B cell (primary cell): ENCODE measurements at regions of chr9 and their contacts with region 1.

Region 1: DNA sequence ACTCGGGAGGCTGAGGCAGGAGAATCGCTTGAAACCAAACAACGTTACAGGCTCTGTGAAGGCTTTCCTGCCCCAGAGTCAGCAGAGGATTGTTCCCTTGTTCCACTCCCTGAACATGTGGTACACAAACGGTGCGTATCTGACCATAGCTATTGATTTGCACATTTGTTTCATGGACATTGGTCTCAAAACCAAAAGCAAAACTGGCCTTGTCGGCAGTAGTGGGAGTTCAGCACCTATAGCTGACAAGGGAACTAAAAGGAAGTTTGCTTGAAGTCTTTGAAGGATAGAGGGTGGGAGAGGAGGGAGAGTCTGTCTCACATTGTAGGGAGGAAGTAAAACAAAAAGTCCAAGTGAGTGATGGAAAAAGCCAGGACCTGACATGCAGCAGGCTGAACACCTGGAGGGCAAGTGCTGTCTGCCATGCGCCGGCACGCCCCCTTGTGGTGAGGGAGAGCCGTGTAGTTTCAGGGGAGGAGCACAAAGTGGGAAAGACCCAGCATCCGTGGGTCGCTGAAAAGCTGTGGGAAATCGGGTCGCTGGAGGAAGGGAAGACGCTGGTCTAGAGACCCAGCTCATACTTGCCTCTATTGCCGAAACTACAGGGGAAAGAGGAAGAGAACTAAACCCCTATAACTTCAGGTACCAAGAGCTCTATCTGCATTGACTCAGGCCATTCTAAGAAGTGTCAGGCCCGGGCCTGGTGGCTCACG is 58.0 kb downstream of the RAD23B start:
- DNase-seq: peak; percentile 84
- ATAC-seq: peak; percentile 84
- H3K4me3 ChIP-seq: peak overlapping the region in 3 of 5 experiments; percentile 2 to 38 (median 17)
- H3K4me3 Mint-ChIP-seq: peak overlapping the region; percentile 58
- H3K27ac ChIP-seq: no peak overlapping the region
- H3K27ac Mint-ChIP-seq: no peak overlapping the region
- H3K4me1 ChIP-seq: peaks cover 3 to 8% of the 10 kb centered on the region in 2 donors
- H3K4me1 Mint-ChIP-seq: peaks cover 8% of the 10 kb centered on the region
- H3K27me3 ChIP-seq: peaks cover 0 to 2% (median 0%) of the 10 kb centered on the region in 4 experiments
- H3K27me3 Mint-ChIP-seq: no peaks in the 10 kb centered on the region
- CTCF ChIP-seq: peak; percentile 94

Region 2: GRCh38 chr9:107137495-107138202 is 203.4 kb before region 1 on chr9:
- CTCF ChIA-PET with region 1: interaction called, 12 read pairs
- POLR2A ChIA-PET with region 1: no interaction called
- intact Hi-C with region 1: no loop called
- DNase-seq: peak; percentile 20
- ATAC-seq: no peak
- H3K4me3 ChIP-seq: no peak overlapping the region
- H3K4me3 Mint-ChIP-seq: no peak overlapping the region
- H3K27ac ChIP-seq: no peak overlapping the region
- H3K27ac Mint-ChIP-seq: no peak overlapping the region
- H3K4me1 ChIP-seq: no peaks in the 10 kb centered on the region
- H3K4me1 Mint-ChIP-seq: no peaks in the 10 kb centered on the region
- H3K27me3 ChIP-seq: peaks cover 0 to 2% (median under 1%) of the 10 kb centered on the region in 4 experiments
- H3K27me3 Mint-ChIP-seq: peaks cover 41% of the 10 kb centered on the region
- CTCF ChIP-seq: peak; percentile 65

Region 3: DNA sequence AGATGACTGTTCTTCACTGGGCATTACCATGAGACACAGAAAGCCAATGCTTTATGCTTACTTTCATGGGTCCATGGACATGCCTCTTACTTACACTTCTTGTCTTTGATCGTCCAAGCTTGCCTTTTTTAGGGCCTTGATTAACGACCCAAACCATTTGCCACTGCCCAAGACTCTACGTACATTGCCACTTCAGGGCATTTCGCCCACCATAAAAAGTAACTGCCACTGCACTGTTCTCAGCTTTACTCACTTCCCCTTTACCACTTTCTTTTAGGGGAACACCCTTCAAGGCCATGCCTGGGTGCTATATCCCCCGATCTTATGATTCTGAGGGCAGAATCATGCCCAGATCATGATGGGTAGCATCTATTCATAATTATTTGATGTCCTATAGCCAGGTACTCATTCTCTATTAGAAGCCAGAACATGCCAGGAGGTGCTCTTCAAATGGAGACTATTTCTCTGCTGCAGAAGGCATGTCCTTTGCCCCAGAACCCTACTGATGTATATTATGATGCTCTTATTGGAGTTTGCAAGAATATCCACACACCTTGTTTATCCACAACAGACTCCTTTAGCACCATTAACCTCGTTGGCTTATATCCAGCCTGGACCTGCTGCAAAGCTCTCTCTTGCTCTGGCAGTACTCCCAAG is 122.1 kb before region 1 on chr9:
- CTCF ChIA-PET with region 1: interaction called, 15 read pairs
- POLR2A ChIA-PET with region 1: no interaction called
- intact Hi-C with region 1: no loop called
- DNase-seq: peak; percentile 57
- ATAC-seq: peak; percentile 88
- H3K4me3 ChIP-seq: no peak overlapping the region
- H3K4me3 Mint-ChIP-seq: peak overlapping the region; percentile 0
- H3K27ac ChIP-seq: no peak overlapping the region
- H3K27ac Mint-ChIP-seq: no peak overlapping the region
- H3K4me1 ChIP-seq: peaks cover 10 to 11% of the 10 kb centered on the region in 2 donors
- H3K4me1 Mint-ChIP-seq: peaks cover 12% of the 10 kb centered on the region
- H3K27me3 ChIP-seq: no peaks in the 10 kb centered on the region
- H3K27me3 Mint-ChIP-seq: peaks cover 3% of the 10 kb centered on the region
- CTCF ChIP-seq: no peak

Region 4: GRCh38 chr9:107260437-107261086 is 80.5 kb before region 1 on chr9:
- CTCF ChIA-PET with region 1: interaction called, 19 read pairs
- POLR2A ChIA-PET with region 1: no interaction called
- intact Hi-C with region 1: no loop called
- DNase-seq: peak; percentile 83
- ATAC-seq: peak; percentile 95
- H3K4me3 ChIP-seq: peak overlapping the region in 3 of 5 experiments; percentile 20 to 43 (median 23)
- H3K4me3 Mint-ChIP-seq: peak overlapping the region; percentile 81
- H3K27ac ChIP-seq: peak overlapping the region; percentile 57 to 58
- H3K27ac Mint-ChIP-seq: peak overlapping the region; percentile 81
- H3K4me1 ChIP-seq: peaks cover 22 to 26% of the 10 kb centered on the region in 2 donors
- H3K4me1 Mint-ChIP-seq: peaks cover 25% of the 10 kb centered on the region
- H3K27me3 ChIP-seq: no peaks in the 10 kb centered on the region
- H3K27me3 Mint-ChIP-seq: peaks cover 6% of the 10 kb centered on the region
- CTCF ChIP-seq: no peak

Region 5: GRCh38 chr9:107323836-107324585 is 17.1 kb before region 1 on chr9:
- CTCF ChIA-PET with region 1: interaction called, 22 read pairs
- POLR2A ChIA-PET with region 1: no interaction called
- intact Hi-C with region 1: no loop called
- DNase-seq: no peak
- ATAC-seq: no peak
- H3K4me3 ChIP-seq: no peak overlapping the region
- H3K4me3 Mint-ChIP-seq: no peak overlapping the region
- H3K27ac ChIP-seq: peak overlapping the region in 1 of 2 donors; percentile 19
- H3K27ac Mint-ChIP-seq: no peak overlapping the region
- H3K4me1 ChIP-seq: no peaks in the 10 kb centered on the region
- H3K4me1 Mint-ChIP-seq: no peaks in the 10 kb centered on the region
- H3K27me3 ChIP-seq: no peaks in the 10 kb centered on the region
- H3K27me3 Mint-ChIP-seq: no peaks in the 10 kb centered on the region
- CTCF ChIP-seq: no peak

Region 6: DNA sequence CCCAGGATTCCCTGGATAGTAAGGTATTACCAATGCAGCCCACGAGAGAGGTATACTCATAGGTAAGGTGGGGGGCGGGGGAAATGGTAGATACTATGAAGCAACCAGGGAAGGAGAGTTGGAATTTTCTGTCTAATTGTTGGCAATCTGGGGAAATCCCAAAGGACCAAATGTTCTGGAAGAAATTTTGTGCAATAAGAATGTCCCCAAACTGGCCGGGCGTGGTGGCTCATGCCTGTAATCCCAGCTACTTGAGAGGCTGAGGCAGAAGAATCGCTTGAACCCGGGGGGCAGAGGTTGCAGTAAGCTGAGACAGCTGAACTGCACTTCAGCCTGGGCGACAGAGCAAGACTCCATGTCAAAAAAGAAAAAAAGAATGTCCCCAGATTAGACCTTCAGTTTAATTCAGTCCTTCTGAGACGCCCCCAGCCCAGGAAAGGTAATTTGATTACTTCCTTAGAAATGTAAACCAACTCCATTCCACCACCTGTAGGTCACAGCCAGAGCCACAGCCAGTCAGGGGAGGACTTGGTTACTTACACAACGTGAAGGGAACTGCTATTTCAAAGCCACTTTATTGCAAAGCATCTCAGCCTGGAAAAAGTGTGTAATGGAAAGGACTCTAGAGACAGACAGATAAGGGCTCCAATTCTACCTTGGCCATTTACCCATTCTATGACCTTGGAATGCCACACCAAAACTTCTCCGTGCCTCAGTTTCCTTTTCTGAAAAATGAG is 198.5 kb after region 1 on chr9:
- CTCF ChIA-PET with region 1: no interaction called
- POLR2A ChIA-PET with region 1: no interaction called
- intact Hi-C with region 1: no loop called
- DNase-seq: no peak
- ATAC-seq: no peak
- H3K4me3 ChIP-seq: no peak overlapping the region
- H3K4me3 Mint-ChIP-seq: no peak overlapping the region
- H3K27ac ChIP-seq: no peak overlapping the region
- H3K27ac Mint-ChIP-seq: no peak overlapping the region
- H3K4me1 ChIP-seq: no peaks in the 10 kb centered on the region
- H3K4me1 Mint-ChIP-seq: no peaks in the 10 kb centered on the region
- H3K27me3 ChIP-seq: peaks cover 0 to 3% (median 0%) of the 10 kb centered on the region in 4 experiments
- H3K27me3 Mint-ChIP-seq: no peaks in the 10 kb centered on the region
- CTCF ChIP-seq: no peak